Naive thymus-derived CD4-positive, alpha-beta T cell (primary cell): ENCODE measurements at regions of chr11 and their contacts with region 1.

Region 1: GRCh38 chr11:62665075-62665598 is at the starts of genes C11orf98 and CSKMT:
- DNase-seq: peak; percentile 90 to 99 (median 95)
- ATAC-seq: peak; percentile 97
- H3K4me3 ChIP-seq: peak within 1 kb of the TSS; percentile 85
- H3K4me3 Mint-ChIP-seq: peak within 1 kb of the TSS; percentile 93 to 98 (median 96)
- H3K27ac ChIP-seq: peak within 1 kb of the TSS; percentile 85
- H3K27ac Mint-ChIP-seq: peak within 1 kb of the TSS; percentile 89 to 97 (median 93)
- H3K4me1 ChIP-seq: peaks cover 16 to 21% of the 10 kb centered on the region in 2 donors
- H3K4me1 Mint-ChIP-seq: peaks cover 13 to 45% (median 32%) of the 10 kb centered on the region in 7 donors
- H3K27me3 ChIP-seq: no peaks in the 10 kb centered on the region
- H3K27me3 Mint-ChIP-seq: no peaks in the 10 kb centered on the region
- total RNA-seq, gene C11orf98: 23.2 to 103 (median 47.6) TPM
- total RNA-seq, gene CSKMT: 8.9 to 29.3 (median 23.7) TPM

Region 2: DNA sequence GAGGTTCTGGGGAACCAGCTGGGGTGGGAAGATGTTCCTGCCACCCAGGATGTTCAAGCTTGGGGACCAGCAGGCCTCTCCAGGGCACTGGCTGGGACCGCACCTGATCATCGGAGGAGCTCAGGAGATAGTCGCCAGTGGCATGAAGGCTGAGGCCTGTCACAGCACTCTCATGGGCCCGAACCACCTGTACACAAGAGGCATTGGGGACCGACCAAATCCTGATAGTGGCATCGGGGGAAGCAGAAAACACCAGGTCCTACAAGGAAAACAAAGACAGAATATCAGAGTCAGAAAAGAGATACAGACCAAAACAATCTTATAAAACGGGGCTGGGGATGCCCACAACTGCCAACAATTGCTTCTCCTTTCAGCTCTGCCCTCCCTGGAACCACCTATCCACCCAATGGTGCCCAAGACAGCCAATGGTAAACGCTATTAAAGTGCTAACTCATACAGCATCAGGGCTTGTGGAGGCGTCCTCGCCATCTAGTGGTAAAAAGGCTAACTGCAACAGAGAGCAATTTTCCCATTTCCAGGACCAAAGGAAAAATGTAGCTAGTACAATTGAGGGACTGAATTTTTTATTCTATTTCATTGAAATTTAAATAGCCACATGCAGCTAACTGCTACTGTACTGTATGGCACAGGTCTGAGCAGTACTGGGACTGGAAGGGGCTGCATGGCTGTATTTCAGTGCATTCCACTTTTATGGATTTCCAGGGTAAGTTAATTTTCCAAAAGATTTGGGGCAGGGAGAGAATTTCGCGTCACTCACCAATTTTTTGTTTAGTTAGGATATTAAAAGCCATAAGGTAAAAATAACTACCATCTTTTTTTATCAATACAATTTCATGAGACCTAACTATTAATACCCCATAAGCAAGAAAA is 1765.8 kb before region 1 on chr11:
- CTCF ChIA-PET with region 1: no interaction called
- POLR2A ChIA-PET with region 1: no interaction called
- intact Hi-C with region 1: no loop called
- DNase-seq: peak in 7 of 9 donors; percentile 11 to 56 (median 37)
- ATAC-seq: peak; percentile 95
- H3K4me3 ChIP-seq: no peak overlapping the region
- H3K4me3 Mint-ChIP-seq: no peak overlapping the region
- H3K27ac ChIP-seq: no peak overlapping the region
- H3K27ac Mint-ChIP-seq: peak overlapping the region in 3 of 9 donors; percentile 16 to 51 (median 38)
- H3K4me1 ChIP-seq: peaks cover 0 to 3% of the 10 kb centered on the region in 2 donors
- H3K4me1 Mint-ChIP-seq: peaks cover 10 to 25% (median 20%) of the 10 kb centered on the region in 7 donors
- H3K27me3 ChIP-seq: no peaks in the 10 kb centered on the region
- H3K27me3 Mint-ChIP-seq: no peaks in the 10 kb centered on the region

Region 3: GRCh38 chr11:62400760-62401159 is 264.4 kb before region 1 on chr11:
- CTCF ChIA-PET with region 1: interaction called, 3 read pairs
- POLR2A ChIA-PET with region 1: interaction called, 11 read pairs
- intact Hi-C with region 1: no loop called
- DNase-seq: no peak
- ATAC-seq: no peak
- H3K4me3 ChIP-seq: no peak overlapping the region
- H3K4me3 Mint-ChIP-seq: peak overlapping the region in 6 of 10 donors; percentile 78 to 90 (median 86)
- H3K27ac ChIP-seq: peak overlapping the region; percentile 35
- H3K27ac Mint-ChIP-seq: peak overlapping the region in 6 of 9 donors; percentile 21 to 89 (median 82)
- H3K4me1 ChIP-seq: peaks cover 18 to 44% of the 10 kb centered on the region in 2 donors
- H3K4me1 Mint-ChIP-seq: peaks cover 24 to 63% (median 47%) of the 10 kb centered on the region in 7 donors
- H3K27me3 ChIP-seq: no peaks in the 10 kb centered on the region
- H3K27me3 Mint-ChIP-seq: no peaks in the 10 kb centered on the region

Region 4: GRCh38 chr11:62601394-62602140 is 63.6 kb before region 1 on chr11 and contains the start of gene MTA2:
- CTCF ChIA-PET with region 1: interaction called, 8 read pairs
- POLR2A ChIA-PET with region 1: interaction called, 269 read pairs
- intact Hi-C with region 1: loop called in 1 of 2 experiments (anchors 1 kb)
- DNase-seq: peak; percentile 98 to 100 (median 100)
- ATAC-seq: peak; percentile 85
- H3K4me3 ChIP-seq: peak within 1 kb of the TSS; percentile 71
- H3K4me3 Mint-ChIP-seq: peak within 1 kb of the TSS; percentile 85 to 99 (median 94)
- H3K27ac ChIP-seq: peak within 1 kb of the TSS; percentile 98
- H3K27ac Mint-ChIP-seq: peak within 1 kb of the TSS; percentile 90 to 98 (median 97)
- H3K4me1 ChIP-seq: peaks cover 16 to 23% of the 10 kb centered on the region in 2 donors
- H3K4me1 Mint-ChIP-seq: peaks cover 43 to 64% (median 54%) of the 10 kb centered on the region in 7 donors
- H3K27me3 ChIP-seq: no peaks in the 10 kb centered on the region
- H3K27me3 Mint-ChIP-seq: no peaks in the 10 kb centered on the region
- total RNA-seq, gene MTA2: 134 to 238 (median 199) TPM

Region 5: GRCh38 chr11:62621567-62622470 is 43.3 kb before region 1 on chr11 and contains the start of gene B3GAT3:
- CTCF ChIA-PET with region 1: interaction called, 4 read pairs
- POLR2A ChIA-PET with region 1: interaction called, 94 read pairs
- intact Hi-C with region 1: loop called (anchors 1 kb)
- DNase-seq: peak; percentile 87 to 97 (median 94)
- ATAC-seq: peak; percentile 93
- H3K4me3 ChIP-seq: peak within 1 kb of the TSS; percentile 97
- H3K4me3 Mint-ChIP-seq: peak within 1 kb of the TSS; percentile 91 to 99 (median 94)
- H3K27ac ChIP-seq: peak within 1 kb of the TSS; percentile 92
- H3K27ac Mint-ChIP-seq: peak within 1 kb of the TSS; percentile 92 to 99 (median 96)
- H3K4me1 ChIP-seq: peaks cover 11% of the 10 kb centered on the region in 2 donors
- H3K4me1 Mint-ChIP-seq: peaks cover 13 to 29% (median 26%) of the 10 kb centered on the region in 7 donors
- H3K27me3 ChIP-seq: no peaks in the 10 kb centered on the region
- H3K27me3 Mint-ChIP-seq: no peaks in the 10 kb centered on the region
- total RNA-seq, gene B3GAT3: 55.8 to 78.1 (median 71.2) TPM

Region 6: DNA sequence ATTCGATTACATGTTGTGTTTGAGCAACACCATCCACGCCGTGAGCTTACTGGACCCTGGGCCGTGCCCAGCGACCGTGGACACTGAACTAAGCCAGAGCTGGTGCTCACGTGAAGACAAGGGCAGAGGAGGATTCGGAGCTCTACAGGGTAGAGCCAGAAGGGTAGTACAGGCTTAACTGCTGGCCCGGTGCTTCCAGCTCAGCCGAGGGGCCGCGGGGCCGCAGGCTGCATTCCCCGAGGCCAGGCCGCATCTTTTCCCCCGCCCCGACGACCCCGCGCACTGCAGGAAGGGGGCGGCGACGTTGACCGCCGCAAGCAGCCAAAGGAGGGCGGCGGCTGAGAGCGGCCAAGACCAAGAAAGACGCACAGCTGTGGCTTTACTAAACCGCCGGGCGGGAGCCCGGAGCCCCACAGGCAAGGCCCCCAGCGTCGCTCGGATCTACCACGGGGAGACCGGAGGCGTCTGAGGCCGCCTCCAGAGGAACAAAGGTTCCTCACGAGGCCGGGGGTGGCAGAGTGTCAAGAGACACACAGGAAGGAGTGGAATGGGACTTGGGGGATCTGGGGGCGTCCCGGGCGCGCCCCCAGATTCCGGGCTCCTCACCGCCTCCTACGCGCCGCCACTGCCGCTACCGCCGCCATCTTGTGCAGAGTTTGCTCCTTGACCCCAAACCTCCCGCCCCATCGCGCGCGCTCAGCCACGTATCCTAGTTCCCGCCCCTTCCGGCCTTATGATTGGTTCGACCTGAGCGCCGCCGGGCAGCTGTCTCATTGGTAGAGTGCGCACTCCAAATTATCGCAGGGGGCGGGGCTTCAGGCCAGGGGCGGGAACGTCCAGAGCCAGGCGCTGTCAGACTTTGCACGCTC is 18.9 kb before region 1 on chr11 and contains the start of gene GANAB:
- CTCF ChIA-PET with region 1: interaction called, 4 read pairs
- POLR2A ChIA-PET with region 1: interaction called, 332 read pairs
- intact Hi-C with region 1: loop called (anchors 1 to 2 kb)
- DNase-seq: peak; percentile 89 to 99 (median 97)
- ATAC-seq: peak; percentile 99
- H3K4me3 ChIP-seq: peak within 1 kb of the TSS; percentile 84
- H3K4me3 Mint-ChIP-seq: peak within 1 kb of the TSS; percentile 94 to 99 (median 98)
- H3K27ac ChIP-seq: peak within 1 kb of the TSS; percentile 97
- H3K27ac Mint-ChIP-seq: peak within 1 kb of the TSS; percentile 92 to 98 (median 96)
- H3K4me1 ChIP-seq: peaks cover 6 to 25% of the 10 kb centered on the region in 2 donors
- H3K4me1 Mint-ChIP-seq: peaks cover 6 to 44% (median 37%) of the 10 kb centered on the region in 7 donors
- H3K27me3 ChIP-seq: no peaks in the 10 kb centered on the region
- H3K27me3 Mint-ChIP-seq: no peaks in the 10 kb centered on the region
- total RNA-seq, gene GANAB: 203 to 313 (median 286) TPM

Region 7: DNA sequence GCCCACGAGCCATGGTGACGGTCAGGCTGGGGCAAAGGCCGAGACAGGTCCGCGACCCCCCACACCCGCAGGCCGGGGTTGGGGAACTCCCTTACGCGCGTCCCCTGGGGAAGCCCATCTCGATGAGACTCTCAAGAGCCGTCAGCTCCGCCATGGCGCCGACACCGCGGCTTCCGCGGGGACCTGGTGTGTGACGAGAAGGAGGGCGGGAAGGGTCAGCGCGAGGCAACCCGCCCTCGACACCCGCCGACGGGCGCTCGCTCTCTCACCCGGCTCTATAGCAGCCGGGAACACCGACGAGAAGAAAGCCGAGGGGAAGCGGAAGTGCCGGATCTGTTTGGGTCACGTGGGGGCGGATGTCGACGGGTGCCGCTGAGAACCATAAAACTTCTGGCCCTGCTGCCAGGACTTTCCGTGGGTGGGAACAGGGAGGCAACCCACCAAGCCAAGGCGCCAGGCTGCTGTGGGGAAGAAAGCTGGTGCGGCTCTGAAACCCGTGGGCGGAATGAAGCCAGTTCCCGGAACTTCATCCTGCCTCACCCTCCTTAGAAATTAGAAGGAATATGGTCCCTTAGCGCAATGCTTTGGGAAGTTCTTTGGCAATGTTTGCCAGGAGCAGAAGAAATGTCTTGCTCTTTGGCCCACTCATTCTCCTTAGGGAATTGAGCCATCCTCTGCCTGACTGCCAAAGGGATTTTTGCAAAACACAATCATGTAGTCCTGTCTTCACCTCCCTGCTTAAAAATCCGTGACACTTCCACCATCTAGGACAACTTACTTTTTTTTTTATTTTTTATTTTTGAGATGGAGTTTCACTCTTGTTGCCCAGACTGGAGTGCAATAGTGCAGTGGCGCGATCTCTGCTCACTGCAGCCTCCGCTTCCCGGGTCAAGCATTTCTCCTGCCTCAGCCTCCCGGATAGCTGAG is 13.9 kb after region 1 on chr11 and contains the start of gene UBXN1:
- CTCF ChIA-PET with region 1: interaction called, 11 read pairs
- POLR2A ChIA-PET with region 1: interaction called, 157 read pairs
- intact Hi-C with region 1: loop called in 1 of 2 experiments (anchors 1 kb)
- DNase-seq: peak; percentile 63 to 84 (median 81)
- ATAC-seq: peak; percentile 91
- H3K4me3 ChIP-seq: peak within 1 kb of the TSS; percentile 87
- H3K4me3 Mint-ChIP-seq: peak within 1 kb of the TSS; percentile 86 to 93 (median 90)
- H3K27ac ChIP-seq: peak within 1 kb of the TSS; percentile 98
- H3K27ac Mint-ChIP-seq: peak within 1 kb of the TSS; percentile 88 to 98 (median 94)
- H3K4me1 ChIP-seq: peaks cover 13 to 15% of the 10 kb centered on the region in 2 donors
- H3K4me1 Mint-ChIP-seq: peaks cover 19 to 41% (median 37%) of the 10 kb centered on the region in 7 donors
- H3K27me3 ChIP-seq: no peaks in the 10 kb centered on the region
- H3K27me3 Mint-ChIP-seq: no peaks in the 10 kb centered on the region
- total RNA-seq, gene UBXN1: 114 to 215 (median 207) TPM

Region 8: DNA sequence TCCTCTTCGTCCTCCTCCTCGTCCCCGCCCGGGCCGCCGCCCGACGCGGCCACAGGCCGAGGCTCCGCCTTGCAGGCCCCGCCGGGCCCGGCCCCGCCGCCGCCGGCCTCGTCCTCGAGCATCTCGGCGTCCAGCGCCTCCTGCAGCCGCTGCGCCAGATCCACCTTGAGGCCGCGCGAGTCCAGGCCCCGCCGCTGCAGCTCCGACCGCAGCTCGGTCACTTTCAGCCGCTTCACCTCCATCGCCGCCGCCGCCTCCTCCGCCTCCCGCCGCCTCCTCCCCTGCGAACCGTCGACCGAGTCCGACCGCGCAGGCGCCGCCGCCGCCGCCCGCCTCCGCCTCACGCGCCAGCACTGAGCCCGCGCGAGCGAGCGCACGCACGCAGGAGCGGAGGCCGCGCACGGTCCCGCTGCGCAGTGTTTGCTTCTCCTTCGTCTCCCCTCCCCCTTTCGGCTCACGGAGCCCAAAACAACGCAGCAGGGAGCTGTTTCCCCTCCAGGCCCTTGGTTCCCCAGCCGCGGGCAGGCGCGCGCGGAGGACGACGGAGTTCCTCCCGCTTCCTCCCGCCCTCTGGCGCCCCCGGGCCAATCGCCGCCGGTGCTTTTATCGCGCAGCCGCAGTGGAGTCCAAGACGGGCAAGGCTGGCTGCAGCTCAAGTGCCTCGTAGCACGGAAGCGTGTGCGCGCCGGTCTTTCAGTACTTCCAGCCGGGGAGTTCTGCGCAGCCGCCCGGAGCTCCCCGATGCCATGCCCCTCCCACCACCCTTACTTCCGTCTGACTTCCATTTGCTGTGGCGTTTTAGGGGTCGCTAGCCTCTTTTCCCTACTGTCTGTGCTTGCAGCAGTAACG is 62.0 kb after region 1 on chr11 and contains the start of gene HNRNPUL2:
- CTCF ChIA-PET with region 1: no interaction called
- POLR2A ChIA-PET with region 1: interaction called, 41 read pairs
- intact Hi-C with region 1: loop called in 1 of 2 experiments (anchors 1 kb)
- DNase-seq: peak; percentile 96 to 100 (median 99)
- ATAC-seq: peak; percentile 89
- H3K4me3 ChIP-seq: peak within 1 kb of the TSS; percentile 87
- H3K4me3 Mint-ChIP-seq: peak within 1 kb of the TSS; percentile 91 to 99 (median 96)
- H3K27ac ChIP-seq: peak within 1 kb of the TSS; percentile 92
- H3K27ac Mint-ChIP-seq: peak within 1 kb of the TSS; percentile 95 to 100 (median 98)
- H3K4me1 ChIP-seq: peaks cover 36 to 38% of the 10 kb centered on the region in 2 donors
- H3K4me1 Mint-ChIP-seq: peaks cover 23 to 65% (median 58%) of the 10 kb centered on the region in 7 donors
- H3K27me3 ChIP-seq: no peaks in the 10 kb centered on the region
- H3K27me3 Mint-ChIP-seq: peaks cover 0 to 2% (median 0%) of the 10 kb centered on the region in 5 donors
- total RNA-seq, gene HNRNPUL2: 43.4 to 77.5 (median 65.3) TPM